GM10248 (cell line): ENCODE measurements at regions of chr1 and their contacts with region 1.

Region 1: DNA sequence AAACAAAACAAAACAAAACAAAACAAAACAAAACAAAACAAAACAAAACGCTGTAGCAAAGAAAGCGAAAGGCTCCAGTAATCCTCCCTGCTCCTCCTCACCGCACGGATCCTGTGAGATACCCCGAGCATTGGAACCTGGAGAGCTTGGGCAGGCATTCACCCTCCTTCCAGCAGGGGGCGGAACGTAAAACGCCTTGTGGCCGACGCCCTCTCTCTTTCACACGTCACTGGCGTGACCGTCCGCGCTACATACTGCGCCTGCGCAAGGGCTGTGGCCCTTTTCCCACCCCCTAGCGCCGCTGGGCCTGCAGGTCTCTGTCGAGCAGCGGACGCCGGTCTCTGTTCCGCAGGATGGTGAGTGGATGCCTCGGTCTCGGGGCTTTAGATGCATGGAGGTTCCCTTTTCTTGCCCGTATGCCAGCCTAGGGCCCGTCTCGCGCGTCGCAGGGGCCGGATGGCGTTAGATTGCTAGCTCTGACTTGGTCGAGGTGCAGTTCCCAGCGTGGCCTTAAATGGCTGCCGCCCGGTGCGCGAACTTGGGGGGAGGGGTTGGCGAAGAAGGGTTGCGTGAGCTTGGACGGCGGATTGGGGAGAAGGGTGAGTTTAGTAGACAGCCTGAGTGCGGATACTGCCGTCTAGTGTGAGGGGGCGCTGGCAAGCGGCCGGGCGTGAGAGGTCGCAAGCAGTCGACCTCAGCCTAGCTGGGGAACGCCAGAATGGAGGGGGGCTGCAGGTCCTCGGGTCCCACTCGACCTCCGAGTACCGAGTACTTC is at the start of gene RPL5:
- DNase-seq: peak; percentile 98
- CTCF ChIP-seq: peak; percentile 97

Region 2: DNA sequence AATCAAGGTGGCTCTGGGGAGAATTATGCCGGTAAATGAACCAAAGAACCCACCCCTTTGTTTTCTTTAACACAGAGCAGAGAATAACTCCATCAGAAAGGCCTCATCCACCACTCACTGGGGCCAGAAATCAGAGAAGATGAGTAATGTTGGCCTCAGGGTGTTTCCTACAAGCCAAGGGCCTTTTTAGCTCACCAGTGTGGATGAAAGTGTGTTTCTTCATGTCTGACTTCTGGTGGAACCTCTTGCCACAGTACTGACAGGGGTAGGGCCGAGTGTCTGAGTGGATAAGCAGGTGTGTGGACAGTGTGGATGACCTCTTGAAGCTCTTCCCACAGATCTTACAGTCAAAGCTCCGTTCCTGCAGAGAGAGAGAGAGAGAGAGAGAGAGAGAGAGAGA is 353.6 kb before region 1 on chr1:
- CTCF ChIA-PET with region 1: no interaction called
- POLR2A ChIA-PET with region 1: no interaction called
- DNase-seq: no peak
- CTCF ChIP-seq: no peak

Region 3: GRCh38 chr1:92764116-92764515 is 67.8 kb before region 1 on chr1:
- CTCF ChIA-PET with region 1: no interaction called
- POLR2A ChIA-PET with region 1: no interaction called
- DNase-seq: no peak
- CTCF ChIP-seq: no peak

Region 4: GRCh38 chr1:92784639-92785500 is 47.1 kb before region 1 on chr1 and contains the start of gene EVI5:
- CTCF ChIA-PET with region 1: interaction called, 14 read pairs
- POLR2A ChIA-PET with region 1: no interaction called
- DNase-seq: peak; percentile 93
- CTCF ChIP-seq: no peak

Region 5: DNA sequence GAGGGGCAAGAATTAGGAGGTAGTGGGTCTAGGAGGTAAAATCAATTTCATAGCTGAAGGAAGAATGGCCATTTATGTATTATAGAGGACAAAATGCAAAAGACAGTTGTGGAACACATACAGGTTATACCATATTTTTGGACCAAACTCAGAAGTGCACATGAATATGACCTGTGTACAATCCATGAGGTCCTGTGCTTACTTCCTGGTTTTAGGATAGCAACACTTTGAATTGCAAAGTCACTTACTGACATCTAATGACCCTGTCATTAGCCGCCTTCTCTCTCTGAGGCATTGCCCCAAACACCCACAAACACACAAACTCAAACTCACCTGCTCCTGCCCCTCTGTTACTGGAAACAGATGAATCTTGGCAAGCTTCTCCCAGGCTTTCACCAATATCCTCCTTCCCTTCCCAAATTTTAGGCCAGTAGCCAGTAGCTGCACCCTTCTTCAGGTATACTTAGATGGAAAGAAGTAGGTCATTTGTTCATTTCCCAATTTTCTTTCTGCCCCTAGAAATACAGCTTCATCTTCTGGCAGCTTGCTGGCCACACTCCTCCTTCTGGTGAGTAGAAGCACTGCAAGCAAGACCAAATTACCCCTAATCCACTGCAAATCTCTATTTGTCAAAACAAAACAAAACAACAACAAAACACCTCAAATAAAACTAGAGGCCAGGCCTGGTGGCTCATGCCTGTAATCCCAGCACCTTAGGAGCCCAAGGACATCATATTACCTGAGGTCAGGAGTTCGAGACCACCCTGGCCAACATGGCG is 13.8 kb before region 1 on chr1:
- CTCF ChIA-PET with region 1: interaction called, 47 read pairs
- POLR2A ChIA-PET with region 1: no interaction called
- DNase-seq: peak; percentile 46
- CTCF ChIP-seq: peak; percentile 82

Region 6: GRCh38 chr1:92843429-92844352 is 11.7 kb after region 1 on chr1:
- CTCF ChIA-PET with region 1: interaction called, 21 read pairs
- POLR2A ChIA-PET with region 1: interaction called, 4 read pairs
- DNase-seq: no peak
- CTCF ChIP-seq: no peak